OCI-LY7 (cell line): ENCODE measurements at regions of chr2 and their contacts with region 1.

Region 1: GRCh38 chr2:120312861-120313694 is 32.9 kb upstream of the INHBB start:
- DNase-seq: peak; percentile 77
- H3K4me3 ChIP-seq: no peak overlapping the region
- H3K27ac ChIP-seq: no peak overlapping the region
- H3K4me1 ChIP-seq: peaks cover 26% of the 10 kb centered on the region
- CTCF ChIP-seq: peak; percentile 92

Region 2: GRCh38 chr2:119702918-119703401 is 610.1 kb before region 1 on chr2:
- CTCF ChIA-PET with region 1: no interaction called
- POLR2A ChIA-PET with region 1: no interaction called
- intact Hi-C with region 1: loop called (anchors 5 kb)
- DNase-seq: peak; percentile 75
- H3K4me3 ChIP-seq: no peak overlapping the region
- H3K27ac ChIP-seq: no peak overlapping the region
- H3K4me1 ChIP-seq: peaks cover 14% of the 10 kb centered on the region
- CTCF ChIP-seq: peak; percentile 97

Region 3: GRCh38 chr2:120012771-120013596 is 300.1 kb before region 1 on chr2 and contains the start of gene EPB41L5:
- CTCF ChIA-PET with region 1: no interaction called
- POLR2A ChIA-PET with region 1: no interaction called
- intact Hi-C with region 1: loop called (anchors 5 kb)
- DNase-seq: peak; percentile 96
- H3K4me3 ChIP-seq: peak within 1 kb of the TSS; percentile 82
- H3K27ac ChIP-seq: peak within 1 kb of the TSS; percentile 7
- H3K4me1 ChIP-seq: peaks cover 23% of the 10 kb centered on the region
- CTCF ChIP-seq: no peak
- total RNA-seq, gene EPB41L5: 5.6 and 7.0 TPM in 2 replicates

Region 4: DNA sequence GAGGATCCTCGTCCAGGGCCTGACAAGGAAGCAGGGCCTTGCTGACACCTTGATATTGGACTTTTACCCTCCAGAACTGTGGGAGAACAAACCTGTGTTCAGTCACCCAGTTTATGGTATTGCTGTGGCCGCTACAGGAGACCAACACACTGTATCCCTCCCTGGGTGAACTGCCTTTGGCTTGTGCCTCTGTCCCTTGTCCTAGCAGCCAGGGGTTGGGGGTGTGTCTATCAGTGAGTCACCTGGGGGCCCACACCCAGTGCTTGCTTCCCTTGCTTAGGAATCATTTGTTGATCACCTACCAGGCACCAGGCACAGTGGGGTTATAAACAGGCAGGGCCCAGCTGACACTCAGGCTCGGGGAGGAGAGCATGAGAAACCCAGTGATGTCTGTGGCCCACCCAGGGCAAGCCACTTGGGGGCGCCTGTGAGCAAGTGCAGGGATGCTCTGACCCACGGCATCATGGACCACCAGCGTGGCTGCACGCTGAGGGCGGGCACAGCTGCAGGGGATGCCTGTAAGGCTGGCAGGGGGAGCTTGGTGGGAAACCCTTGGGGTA is 107.0 kb before region 1 on chr2:
- CTCF ChIA-PET with region 1: interaction called, 3 read pairs
- POLR2A ChIA-PET with region 1: no interaction called
- intact Hi-C with region 1: loop called (anchors 1 kb)
- DNase-seq: peak; percentile 48
- H3K4me3 ChIP-seq: no peak overlapping the region
- H3K27ac ChIP-seq: no peak overlapping the region
- H3K4me1 ChIP-seq: no peaks in the 10 kb centered on the region
- CTCF ChIP-seq: peak; percentile 79

Region 5: DNA sequence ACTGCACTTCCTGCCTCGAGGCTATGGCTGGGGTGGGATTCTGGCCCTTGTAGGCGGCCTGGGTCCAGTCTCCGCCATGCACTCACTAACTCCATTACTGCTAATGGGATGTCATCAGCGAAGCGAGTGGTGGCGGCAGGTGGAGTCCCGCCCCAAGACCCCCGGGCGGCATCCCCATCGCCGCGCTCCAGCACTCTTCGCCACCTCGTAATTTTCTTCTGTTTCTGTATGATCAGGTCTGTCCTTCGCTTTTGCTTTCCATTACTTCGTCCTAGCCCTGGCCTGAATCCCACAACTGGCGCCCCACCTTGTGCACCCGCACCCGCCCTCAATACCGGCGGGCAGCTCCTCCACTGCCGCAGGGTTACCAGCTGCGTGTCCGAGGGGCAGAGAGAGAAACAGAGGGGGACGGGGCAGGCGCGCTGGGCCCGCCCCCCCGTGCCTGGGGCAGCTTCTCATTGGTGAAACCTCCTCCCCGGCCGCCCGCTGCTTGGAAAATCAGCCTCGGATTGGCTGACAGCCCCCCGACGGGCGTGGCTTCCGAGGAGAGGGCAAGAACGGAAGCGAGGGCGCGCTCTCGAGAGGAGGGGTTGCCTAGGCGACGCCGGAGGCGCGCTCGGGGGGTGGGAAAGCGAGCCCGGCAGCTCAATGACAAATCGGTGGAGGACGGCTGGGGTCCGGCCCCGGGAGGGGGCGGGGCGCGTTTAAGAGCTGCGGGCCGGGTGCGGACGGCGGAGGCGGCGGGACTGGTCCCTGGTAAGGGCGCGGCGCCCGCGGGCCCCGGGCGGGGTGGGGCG is 60.7 kb before region 1 on chr2 and contains the start of gene RALB:
- CTCF ChIA-PET with region 1: interaction called, 3 read pairs
- POLR2A ChIA-PET with region 1: interaction called, 3 read pairs
- intact Hi-C with region 1: loop called (anchors 2 kb)
- DNase-seq: peak; percentile 98
- H3K4me3 ChIP-seq: peak within 1 kb of the TSS; percentile 73
- H3K27ac ChIP-seq: no peak within 1 kb of the TSS
- H3K4me1 ChIP-seq: peaks cover 14% of the 10 kb centered on the region
- CTCF ChIP-seq: no peak
- total RNA-seq, gene RALB: 13.7 and 16.2 TPM in 2 replicates